ENCODE measurements at regions of chrX and their contacts with region 1.

Region 1: GRCh38 chrX:14029425-14030173 is at the start of gene GEMIN8:
- DNase-seq: peak; percentile 85 to 92 (median 89)
- H3K4me3 ChIP-seq: peak within 1 kb of the TSS; percentile 4 to 62 (median 36)
- H3K27ac ChIP-seq: peak within 1 kb of the TSS; percentile 53 to 94 (median 77)
- H3K4me1 ChIP-seq: peaks cover 4 to 21% of the 10 kb centered on the region in 2 donors
- H3K27me3 ChIP-seq: peaks cover 3% of the 10 kb centered on the region
- CTCF ChIP-seq: no peak
- POLR2A ChIP-seq: peak; percentile 37 to 77
- total RNA-seq, gene GEMIN8: 13.9 to 30.7 (median 18.8) TPM

Region 2: GRCh38 chrX:13506574-13506973 is 523.0 kb before region 1 on chrX:
- intact Hi-C with region 1: loop called (anchors 5 to 10 kb)
- DNase-seq: peak in 6 of 7 donors; percentile 27 to 62 (median 38)
- H3K4me3 ChIP-seq: no peak overlapping the region
- H3K27ac ChIP-seq: no peak overlapping the region
- H3K4me1 ChIP-seq: no peaks in the 10 kb centered on the region
- H3K27me3 ChIP-seq: peaks cover 2% of the 10 kb centered on the region
- CTCF ChIP-seq: peak; percentile 58 to 87 (median 73)
- POLR2A ChIP-seq: no peak

Region 3: DNA sequence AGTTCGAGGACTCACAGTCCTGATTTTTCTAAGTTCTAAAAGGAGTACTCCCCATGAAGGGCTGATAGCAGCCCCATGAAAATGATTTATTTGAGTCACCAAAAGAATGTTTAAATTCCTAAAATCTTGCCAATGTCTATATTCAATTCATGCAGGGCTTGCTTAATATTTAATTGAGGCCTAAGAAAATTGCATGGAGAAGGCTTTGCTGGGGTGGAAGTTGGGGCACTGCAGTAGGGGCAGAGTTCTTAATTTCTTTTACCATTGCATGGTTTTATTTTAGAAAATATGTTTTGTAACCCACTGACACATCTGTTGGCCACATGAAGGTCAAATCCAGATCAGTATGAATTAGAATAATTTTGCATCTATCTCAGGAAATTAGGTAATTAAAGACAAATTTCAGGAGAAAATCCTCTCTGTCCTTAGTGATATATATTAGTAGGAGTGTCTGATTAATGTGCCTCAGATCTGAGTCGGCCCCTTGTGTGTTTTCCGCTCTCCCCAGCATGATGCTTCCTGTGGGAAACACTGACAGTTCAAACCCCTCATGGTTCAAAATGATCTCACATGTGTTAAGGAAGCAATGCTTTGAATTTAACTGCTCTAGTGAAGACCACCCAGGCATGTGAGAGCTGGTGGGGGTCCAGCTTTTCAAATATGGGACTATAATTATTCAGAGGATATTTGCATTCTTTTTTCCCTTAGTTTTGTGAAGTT is 514.2 kb before region 1 on chrX:
- intact Hi-C with region 1: loop called in 1 of 2 experiments (anchors 10 kb)
- DNase-seq: no peak
- H3K4me3 ChIP-seq: no peak overlapping the region
- H3K27ac ChIP-seq: no peak overlapping the region
- H3K4me1 ChIP-seq: no peaks in the 10 kb centered on the region
- H3K27me3 ChIP-seq: no peaks in the 10 kb centered on the region
- CTCF ChIP-seq: no peak
- POLR2A ChIP-seq: no peak

Region 4: GRCh38 chrX:13750204-13750603 is 279.4 kb before region 1 on chrX:
- intact Hi-C with region 1: loop called in 1 of 2 experiments (anchors 10 kb)
- DNase-seq: no peak
- H3K4me3 ChIP-seq: no peak overlapping the region
- H3K27ac ChIP-seq: no peak overlapping the region
- H3K4me1 ChIP-seq: no peaks in the 10 kb centered on the region
- H3K27me3 ChIP-seq: no peaks in the 10 kb centered on the region
- CTCF ChIP-seq: peak in 5 of 6 experiments; percentile 24 to 55 (median 40)
- POLR2A ChIP-seq: no peak

Region 5: DNA sequence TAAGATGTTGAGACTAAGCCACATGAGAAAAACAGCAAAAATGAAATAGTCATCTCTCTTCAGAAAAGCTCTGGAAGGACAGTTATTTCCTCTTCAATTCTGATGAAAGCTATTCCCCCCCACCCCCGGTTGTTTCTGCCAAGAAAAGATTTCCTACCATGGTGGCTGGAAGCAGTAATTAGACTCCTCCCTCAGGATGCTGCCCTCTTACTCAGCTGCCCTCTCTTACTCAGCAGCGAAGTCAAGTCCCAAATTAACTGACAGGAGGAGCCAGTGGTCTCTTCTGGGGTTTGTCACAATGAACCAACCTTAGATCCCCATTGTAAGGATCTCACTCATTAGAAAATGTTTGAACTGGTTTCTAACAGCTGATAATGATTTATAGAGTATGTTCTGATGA is 250.7 kb before region 1 on chrX:
- intact Hi-C with region 1: loop called in 1 of 2 experiments (anchors 10 kb)
- DNase-seq: peak in 1 of 7 donors; percentile 4
- H3K4me3 ChIP-seq: no peak overlapping the region
- H3K27ac ChIP-seq: no peak overlapping the region
- H3K4me1 ChIP-seq: no peaks in the 10 kb centered on the region
- H3K27me3 ChIP-seq: no peaks in the 10 kb centered on the region
- CTCF ChIP-seq: no peak
- POLR2A ChIP-seq: no peak

Region 6: GRCh38 chrX:13898083-13898482 is 131.5 kb before region 1 on chrX:
- intact Hi-C with region 1: no loop called
- DNase-seq: peak in 3 of 7 donors; percentile 7 to 49 (median 21)
- H3K4me3 ChIP-seq: no peak overlapping the region
- H3K27ac ChIP-seq: no peak overlapping the region
- H3K4me1 ChIP-seq: no peaks in the 10 kb centered on the region
- H3K27me3 ChIP-seq: peaks cover 36% of the 10 kb centered on the region
- CTCF ChIP-seq: peak in 3 of 6 experiments; percentile 8 to 16 (median 13)
- POLR2A ChIP-seq: no peak

Region 7: GRCh38 chrX:14440106-14440505 is 410.5 kb after region 1 on chrX:
- intact Hi-C with region 1: no loop called
- DNase-seq: no peak
- H3K4me3 ChIP-seq: no peak overlapping the region
- H3K27ac ChIP-seq: no peak overlapping the region
- H3K4me1 ChIP-seq: no peaks in the 10 kb centered on the region
- H3K27me3 ChIP-seq: no peaks in the 10 kb centered on the region
- CTCF ChIP-seq: no peak
- POLR2A ChIP-seq: no peak